ENCODE measurements at regions of chr17 and their contacts with region 1.

Region 1: GRCh38 chr17:21126645-21127510 is at the start of gene DHRS7B:
- DNase-seq: peak; percentile 97
- ATAC-seq: peak; percentile 93
- H3K4me3 ChIP-seq: peak within 1 kb of the TSS; percentile 64 to 92 (median 85)
- H3K4me3 Mint-ChIP-seq: peak within 1 kb of the TSS; percentile 95
- H3K27ac ChIP-seq: peak within 1 kb of the TSS; percentile 82 to 95
- H3K27ac Mint-ChIP-seq: peak within 1 kb of the TSS; percentile 91
- H3K4me1 ChIP-seq: peaks cover 19 to 22% of the 10 kb centered on the region in 2 donors
- H3K4me1 Mint-ChIP-seq: peaks cover 28% of the 10 kb centered on the region
- H3K27me3 ChIP-seq: peaks cover 0 to 3% (median 0%) of the 10 kb centered on the region in 4 experiments
- H3K27me3 Mint-ChIP-seq: no peaks in the 10 kb centered on the region
- CTCF ChIP-seq: no peak
- total RNA-seq, gene DHRS7B: 13.4 and 14.2 TPM in 2 replicates

Region 2: DNA sequence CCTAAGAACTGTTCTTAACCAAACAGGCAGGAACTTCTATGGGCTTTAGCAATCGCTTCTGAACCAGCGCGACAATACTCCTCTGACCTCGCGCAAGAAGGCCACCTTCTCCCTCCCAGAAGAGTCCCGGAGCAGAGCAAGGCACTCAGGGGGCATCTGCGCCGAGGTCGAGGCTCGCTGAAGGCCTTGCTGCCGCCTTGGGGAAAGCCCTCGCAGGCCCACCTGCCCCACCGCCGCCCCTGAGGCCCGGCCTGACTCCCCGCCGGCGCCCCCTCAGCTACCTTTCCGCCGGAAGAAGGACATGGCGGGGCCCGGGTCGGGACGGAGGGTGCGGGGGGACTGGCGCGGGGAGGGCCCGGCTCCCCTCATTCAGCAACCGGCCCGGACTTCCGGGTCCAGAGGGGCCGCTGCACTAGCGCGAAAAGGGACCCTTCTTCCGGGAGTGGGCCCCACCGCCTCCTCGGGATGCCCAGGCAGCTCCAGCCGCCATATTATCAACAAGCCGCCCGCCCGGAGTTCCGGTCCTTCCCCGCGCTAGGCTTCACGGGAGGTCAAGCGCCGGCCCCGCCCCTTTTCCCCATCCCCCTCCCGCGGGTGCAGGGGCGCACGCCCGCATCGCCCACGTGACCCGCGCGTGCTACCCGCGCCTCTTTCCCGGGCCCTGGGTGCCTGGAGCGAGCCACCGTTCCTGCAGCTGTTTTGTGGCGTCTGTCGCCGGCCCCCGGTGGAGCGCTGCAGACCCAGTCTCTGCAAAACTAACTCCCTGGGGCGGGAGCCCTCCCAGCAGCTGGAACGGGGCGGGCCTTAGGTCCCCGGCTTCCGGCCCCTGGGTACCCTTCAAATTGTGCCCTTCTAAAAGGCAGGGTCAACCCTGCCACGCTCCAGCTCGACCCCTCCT is 1149.3 kb before region 1 on chr17 and contains the start of gene AKAP10:
- CTCF ChIA-PET with region 1: no interaction called
- POLR2A ChIA-PET with region 1: no interaction called
- intact Hi-C with region 1: loop called (anchors 2 kb)
- DNase-seq: peak; percentile 94
- ATAC-seq: peak; percentile 87
- H3K4me3 ChIP-seq: peak within 1 kb of the TSS; percentile 83 to 93 (median 90)
- H3K4me3 Mint-ChIP-seq: peak within 1 kb of the TSS; percentile 99
- H3K27ac ChIP-seq: peak within 1 kb of the TSS; percentile 85 to 96
- H3K27ac Mint-ChIP-seq: peak within 1 kb of the TSS; percentile 98
- H3K4me1 ChIP-seq: peaks cover 23 to 40% of the 10 kb centered on the region in 2 donors
- H3K4me1 Mint-ChIP-seq: peaks cover 47% of the 10 kb centered on the region
- H3K27me3 ChIP-seq: no peaks in the 10 kb centered on the region
- H3K27me3 Mint-ChIP-seq: no peaks in the 10 kb centered on the region
- CTCF ChIP-seq: no peak
- total RNA-seq, gene AKAP10: 68.2 and 71.2 TPM in 2 replicates

Region 3: DNA sequence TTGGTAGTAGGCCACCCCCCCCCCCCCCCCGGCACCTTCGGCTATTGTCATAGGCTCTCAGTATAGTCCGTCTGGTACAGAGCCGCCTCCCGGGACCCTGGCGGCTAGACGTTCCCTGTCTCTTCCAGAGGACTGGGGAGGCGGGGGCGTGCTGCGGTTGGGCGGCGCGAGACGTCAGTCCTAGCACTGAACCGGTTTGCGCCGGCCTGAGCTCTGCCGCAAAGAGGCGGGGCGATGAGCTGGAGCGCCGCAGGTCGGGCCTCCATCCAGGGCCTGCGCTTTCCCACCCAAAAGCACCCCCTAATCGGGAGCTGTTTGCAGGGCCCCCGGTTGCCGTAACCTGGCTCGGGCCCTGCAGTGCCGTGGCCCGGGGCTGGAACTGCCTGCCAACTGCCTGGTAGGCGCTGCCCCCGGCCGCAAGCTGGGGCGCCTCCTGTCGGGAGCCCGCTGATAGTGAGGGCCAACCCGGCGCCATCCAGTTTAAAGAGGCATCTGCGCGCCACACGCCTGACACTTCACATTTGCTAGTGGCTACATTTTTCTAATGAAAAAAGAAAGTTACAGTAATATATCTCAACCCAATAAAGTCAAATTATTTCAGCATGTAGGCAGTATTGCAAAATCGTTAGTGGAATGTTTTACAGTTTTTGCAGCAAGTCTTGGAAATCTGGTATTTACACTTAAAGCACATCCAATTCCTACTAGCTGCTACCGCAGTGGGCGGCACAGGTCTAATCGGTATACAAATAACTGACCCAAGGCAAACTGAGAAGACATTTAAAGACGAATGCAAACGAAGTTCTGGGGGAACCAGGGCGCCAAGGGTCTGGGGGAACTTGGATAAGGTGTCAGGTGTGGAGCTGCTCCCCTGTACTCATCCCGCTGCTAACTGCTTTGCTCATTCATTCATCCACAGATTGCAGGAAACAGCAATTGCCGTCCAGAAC is 83.3 kb before region 1 on chr17:
- CTCF ChIA-PET with region 1: interaction called, 4 read pairs
- POLR2A ChIA-PET with region 1: interaction called, 4 read pairs
- intact Hi-C with region 1: loop called (anchors 1 kb)
- DNase-seq: peak; percentile 98
- ATAC-seq: peak; percentile 75
- H3K4me3 ChIP-seq: peak overlapping the region; percentile 63 to 68 (median 65)
- H3K4me3 Mint-ChIP-seq: peak overlapping the region; percentile 81
- H3K27ac ChIP-seq: peak overlapping the region; percentile 95
- H3K27ac Mint-ChIP-seq: peak overlapping the region; percentile 90
- H3K4me1 ChIP-seq: peaks cover 24 to 37% of the 10 kb centered on the region in 2 donors
- H3K4me1 Mint-ChIP-seq: peaks cover 32% of the 10 kb centered on the region
- H3K27me3 ChIP-seq: no peaks in the 10 kb centered on the region
- H3K27me3 Mint-ChIP-seq: no peaks in the 10 kb centered on the region
- CTCF ChIP-seq: peak; percentile 92

Region 4: GRCh38 chr17:21108651-21109050 is 18.2 kb before region 1 on chr17:
- CTCF ChIA-PET with region 1: interaction called, 12 read pairs
- POLR2A ChIA-PET with region 1: no interaction called
- intact Hi-C with region 1: no loop called
- DNase-seq: no peak
- ATAC-seq: no peak
- H3K4me3 ChIP-seq: no peak overlapping the region
- H3K4me3 Mint-ChIP-seq: no peak overlapping the region
- H3K27ac ChIP-seq: no peak overlapping the region
- H3K27ac Mint-ChIP-seq: no peak overlapping the region
- H3K4me1 ChIP-seq: no peaks in the 10 kb centered on the region
- H3K4me1 Mint-ChIP-seq: no peaks in the 10 kb centered on the region
- H3K27me3 ChIP-seq: no peaks in the 10 kb centered on the region
- H3K27me3 Mint-ChIP-seq: peaks cover 4% of the 10 kb centered on the region
- CTCF ChIP-seq: no peak

Region 5: DNA sequence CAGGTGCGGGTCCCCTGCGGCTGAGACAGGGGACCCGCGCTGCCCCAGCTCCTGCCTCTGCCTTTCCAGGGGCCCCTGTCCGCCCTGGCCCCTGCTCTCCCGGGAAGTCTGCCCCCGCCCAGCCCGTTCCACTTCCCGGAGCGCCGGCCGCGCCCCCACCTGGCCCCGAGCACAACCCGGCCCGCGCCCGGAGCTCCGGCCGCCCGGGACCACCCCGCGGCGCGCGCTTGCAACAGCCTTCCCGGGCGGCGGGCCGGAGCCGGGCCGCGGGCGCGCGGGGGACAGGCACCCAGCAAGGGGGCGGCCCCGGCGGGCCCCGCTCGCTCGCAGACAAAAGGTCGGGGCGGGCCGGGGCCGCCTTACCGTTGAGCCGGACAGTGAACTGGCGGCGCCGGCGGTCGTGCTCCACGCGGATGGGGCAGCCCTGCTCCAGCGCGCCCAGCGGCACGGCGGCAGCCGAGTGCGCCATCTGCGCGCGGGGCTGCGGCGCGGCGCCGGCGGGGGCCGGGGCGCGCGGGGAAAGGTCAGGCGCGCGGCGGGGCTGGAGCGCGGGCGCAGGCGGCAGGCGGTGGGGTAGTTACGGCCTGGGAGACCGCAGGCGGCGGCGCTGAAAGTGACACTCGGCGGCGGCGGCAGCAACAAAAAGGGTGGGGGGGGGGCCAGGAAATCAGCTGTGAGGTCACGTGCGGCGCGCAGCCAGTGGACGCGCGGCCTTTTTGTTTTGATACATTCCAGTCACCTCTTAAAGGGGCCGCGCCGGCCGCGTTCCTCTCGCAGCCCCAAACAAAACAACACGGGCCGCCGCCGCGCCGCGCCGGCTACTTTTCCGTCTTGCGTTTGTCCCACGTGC is 126.1 kb after region 1 on chr17 and contains the start of gene NATD1:
- CTCF ChIA-PET with region 1: interaction called, 3 read pairs
- POLR2A ChIA-PET with region 1: no interaction called
- intact Hi-C with region 1: loop called (anchors 1 kb)
- DNase-seq: peak; percentile 90
- ATAC-seq: peak; percentile 79
- H3K4me3 ChIP-seq: peak within 1 kb of the TSS; percentile 35 to 90 (median 61)
- H3K4me3 Mint-ChIP-seq: peak within 1 kb of the TSS; percentile 89
- H3K27ac ChIP-seq: peak within 1 kb of the TSS; percentile 5 to 70
- H3K27ac Mint-ChIP-seq: peak within 1 kb of the TSS; percentile 88
- H3K4me1 ChIP-seq: peaks cover 11 to 24% of the 10 kb centered on the region in 2 donors
- H3K4me1 Mint-ChIP-seq: peaks cover 22% of the 10 kb centered on the region
- H3K27me3 ChIP-seq: no peaks in the 10 kb centered on the region
- H3K27me3 Mint-ChIP-seq: peaks cover 5% of the 10 kb centered on the region
- CTCF ChIP-seq: no peak
- total RNA-seq, gene NATD1: 6.2 and 6.7 TPM in 2 replicates

Region 6: GRCh38 chr17:21284319-21285163 is 157.7 kb after region 1 on chr17 and contains the start of gene MAP2K3:
- CTCF ChIA-PET with region 1: interaction called, 41 read pairs
- POLR2A ChIA-PET with region 1: no interaction called
- intact Hi-C with region 1: loop called (anchors 1 kb)
- DNase-seq: peak; percentile 98
- ATAC-seq: peak; percentile 66
- H3K4me3 ChIP-seq: peak within 1 kb of the TSS; percentile 81 to 98 (median 93)
- H3K4me3 Mint-ChIP-seq: peak within 1 kb of the TSS; percentile 96
- H3K27ac ChIP-seq: peak within 1 kb of the TSS; percentile 95
- H3K27ac Mint-ChIP-seq: peak within 1 kb of the TSS; percentile 99
- H3K4me1 ChIP-seq: peaks cover 58 to 78% of the 10 kb centered on the region in 2 donors
- H3K4me1 Mint-ChIP-seq: peaks cover 78% of the 10 kb centered on the region
- H3K27me3 ChIP-seq: no peaks in the 10 kb centered on the region
- H3K27me3 Mint-ChIP-seq: no peaks in the 10 kb centered on the region
- CTCF ChIP-seq: no peak
- total RNA-seq, gene MAP2K3: 114 and 118 TPM in 2 replicates

Measured in B cell (primary cell).